Left colon (tissue), 2 donors: ENCODE measurements at regions of chr4 and their contacts with region 1.

Region 1: DNA sequence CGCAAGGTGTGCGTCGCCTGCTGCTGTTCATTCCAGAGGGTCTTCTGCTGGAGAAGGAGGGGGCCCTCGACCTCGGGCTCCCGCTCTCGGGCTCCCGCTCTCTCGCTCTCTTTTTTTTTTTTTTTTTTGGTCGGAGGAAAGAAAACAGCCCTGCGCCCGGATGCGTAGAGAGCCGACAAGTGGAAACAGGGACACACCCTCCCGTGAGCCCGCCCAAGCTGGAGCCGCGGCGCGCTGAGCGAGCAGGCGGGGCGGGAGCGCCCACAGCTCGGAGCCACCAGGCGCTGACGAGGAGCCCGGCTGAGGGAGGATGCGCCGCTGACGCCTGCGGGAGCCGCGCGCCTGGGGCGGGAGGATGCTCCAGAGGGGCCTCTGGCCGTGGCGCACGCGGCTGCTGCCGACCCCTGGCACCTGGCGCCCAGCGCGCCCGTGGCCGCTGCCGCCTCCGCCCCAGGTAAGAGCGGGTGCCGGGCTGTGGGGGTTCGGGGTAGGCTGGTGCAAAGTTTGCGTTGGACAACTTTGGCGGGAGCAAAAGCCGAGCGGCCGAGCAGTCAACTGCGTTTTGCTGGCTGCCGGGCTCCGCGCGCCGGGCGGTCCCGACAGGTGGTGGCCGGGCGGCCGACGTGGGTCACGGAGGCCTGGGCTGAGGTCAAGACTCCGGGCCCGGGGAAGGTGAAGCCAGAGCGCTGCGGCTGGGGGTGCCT is at the start of gene MCUB:
- DNase-seq: peak; percentile 85 to 91
- ATAC-seq: peak; percentile 99
- total RNA-seq, gene MCUB: 4.7 to 5.4 TPM

Region 2: GRCh38 chr4:109977854-109978501 is 417.8 kb after region 1 on chr4:
- intact Hi-C with region 1: loop called in 1 of 2 experiments (anchors 10 kb)
- DNase-seq: no peak
- ATAC-seq: no peak

Region 3: DNA sequence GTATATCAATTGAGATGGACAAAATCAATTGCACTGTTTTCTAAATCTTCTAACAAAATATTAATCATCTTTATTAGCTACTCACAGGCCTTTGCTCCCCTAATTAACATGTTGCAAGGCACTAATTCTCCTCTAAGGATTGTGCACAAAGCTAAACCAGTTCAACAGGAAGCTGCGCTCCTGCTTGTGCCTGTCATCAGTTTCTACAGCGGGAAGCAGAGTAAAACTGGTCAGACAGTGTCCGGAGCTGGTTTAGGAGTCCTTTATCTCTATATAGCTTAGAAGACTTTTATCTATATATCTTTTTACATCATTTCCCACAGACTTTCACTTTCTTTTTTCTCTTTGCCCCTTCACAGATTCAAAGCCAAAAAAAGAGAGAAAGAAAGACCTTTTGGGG is 559.2 kb after region 1 on chr4:
- intact Hi-C with region 1: no loop called
- DNase-seq: peak; percentile 34 to 59
- ATAC-seq: peak; percentile 97